Activated CD4-positive, alpha-beta memory T cell treated with anti-CD3 and anti-CD28 coated beads for 36 hours (primary cell): ENCODE measurements at regions of chr6 and their contacts with region 1.

Region 1: GRCh38 chr6:73129653-73130443 is 95.4 kb downstream of the KHDC1L start:
- DNase-seq: peak; percentile 87
- H3K4me3 Mint-ChIP-seq: no peak overlapping the region
- H3K27ac Mint-ChIP-seq: no peak overlapping the region
- H3K4me1 Mint-ChIP-seq: no peaks in the 10 kb centered on the region
- H3K27me3 Mint-ChIP-seq: peaks cover 1% of the 10 kb centered on the region

Region 2: GRCh38 chr6:71678091-71678490 is 1451.8 kb before region 1 on chr6:
- CTCF ChIA-PET with region 1: no interaction called
- POLR2A ChIA-PET with region 1: no interaction called
- intact Hi-C with region 1: no loop called
- DNase-seq: no peak
- H3K4me3 Mint-ChIP-seq: no peak overlapping the region
- H3K27ac Mint-ChIP-seq: no peak overlapping the region
- H3K4me1 Mint-ChIP-seq: no peaks in the 10 kb centered on the region
- H3K27me3 Mint-ChIP-seq: no peaks in the 10 kb centered on the region

Region 3: DNA sequence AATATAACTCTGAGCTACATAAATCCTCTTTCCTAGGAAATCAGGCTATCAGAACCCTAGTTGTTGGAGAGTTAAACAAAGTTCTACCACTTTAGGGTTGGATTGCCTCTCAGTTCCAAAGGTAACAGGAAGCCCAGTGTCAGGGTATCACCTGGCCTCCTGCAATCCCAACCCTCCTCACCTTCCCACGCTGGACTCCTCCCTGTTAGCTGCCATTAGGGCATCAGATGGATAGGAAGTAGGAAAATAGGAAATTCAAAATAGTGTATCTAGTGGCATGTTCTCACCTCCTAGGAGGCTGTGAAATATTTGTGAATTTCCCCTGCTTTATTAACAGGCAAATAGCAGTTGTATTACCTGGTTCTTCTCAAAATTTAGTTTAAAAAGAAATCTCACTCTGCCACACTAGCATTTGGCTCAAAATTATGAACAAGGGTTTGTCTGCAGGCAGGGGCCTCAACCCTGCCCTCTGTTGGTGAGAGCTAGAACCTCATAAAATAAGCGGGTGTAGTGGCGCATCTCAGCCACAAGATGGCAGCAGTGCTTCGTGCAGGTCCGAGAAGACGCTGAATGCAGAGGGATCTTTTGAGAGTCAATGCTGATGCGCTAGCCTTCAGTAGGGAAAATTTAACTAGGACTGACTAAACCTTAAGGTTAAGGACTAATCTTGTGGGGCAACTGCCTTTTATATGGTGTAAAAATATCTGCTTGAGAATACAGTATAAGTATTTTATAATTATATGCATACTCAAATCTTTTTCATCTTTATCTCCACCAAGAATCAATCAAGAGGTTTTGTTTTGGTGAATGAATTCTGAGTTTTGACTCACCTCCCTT is 717.8 kb before region 1 on chr6:
- CTCF ChIA-PET with region 1: interaction called, 177 read pairs
- POLR2A ChIA-PET with region 1: no interaction called
- intact Hi-C with region 1: loop called (anchors 1 kb)
- DNase-seq: peak; percentile 85
- H3K4me3 Mint-ChIP-seq: no peak overlapping the region
- H3K27ac Mint-ChIP-seq: no peak overlapping the region
- H3K4me1 Mint-ChIP-seq: no peaks in the 10 kb centered on the region
- H3K27me3 Mint-ChIP-seq: no peaks in the 10 kb centered on the region

Region 4: GRCh38 chr6:72522719-72523141 is 607.1 kb before region 1 on chr6:
- CTCF ChIA-PET with region 1: interaction called, 14 read pairs
- POLR2A ChIA-PET with region 1: no interaction called
- intact Hi-C with region 1: loop called (anchors 5 kb)
- DNase-seq: peak; percentile 31
- H3K4me3 Mint-ChIP-seq: no peak overlapping the region
- H3K27ac Mint-ChIP-seq: no peak overlapping the region
- H3K4me1 Mint-ChIP-seq: no peaks in the 10 kb centered on the region
- H3K27me3 Mint-ChIP-seq: peaks cover 1% of the 10 kb centered on the region

Region 5: GRCh38 chr6:72616406-72617015 is 513.3 kb before region 1 on chr6:
- CTCF ChIA-PET with region 1: interaction called, 231 read pairs
- POLR2A ChIA-PET with region 1: no interaction called
- intact Hi-C with region 1: loop called (anchors 1 kb)
- DNase-seq: no peak
- H3K4me3 Mint-ChIP-seq: no peak overlapping the region
- H3K27ac Mint-ChIP-seq: no peak overlapping the region
- H3K4me1 Mint-ChIP-seq: peaks cover 43% of the 10 kb centered on the region
- H3K27me3 Mint-ChIP-seq: peaks cover 2% of the 10 kb centered on the region

Region 6: GRCh38 chr6:73152966-73153757 is 23.3 kb after region 1 on chr6:
- CTCF ChIA-PET with region 1: interaction called, 13 read pairs
- POLR2A ChIA-PET with region 1: no interaction called
- intact Hi-C with region 1: no loop called
- DNase-seq: no peak
- H3K4me3 Mint-ChIP-seq: no peak overlapping the region
- H3K27ac Mint-ChIP-seq: no peak overlapping the region
- H3K4me1 Mint-ChIP-seq: no peaks in the 10 kb centered on the region
- H3K27me3 Mint-ChIP-seq: no peaks in the 10 kb centered on the region